Gastrocnemius medialis (tissue), 4 donors: ENCODE measurements at regions of chr12 and their contacts with region 1.

Region 1: DNA sequence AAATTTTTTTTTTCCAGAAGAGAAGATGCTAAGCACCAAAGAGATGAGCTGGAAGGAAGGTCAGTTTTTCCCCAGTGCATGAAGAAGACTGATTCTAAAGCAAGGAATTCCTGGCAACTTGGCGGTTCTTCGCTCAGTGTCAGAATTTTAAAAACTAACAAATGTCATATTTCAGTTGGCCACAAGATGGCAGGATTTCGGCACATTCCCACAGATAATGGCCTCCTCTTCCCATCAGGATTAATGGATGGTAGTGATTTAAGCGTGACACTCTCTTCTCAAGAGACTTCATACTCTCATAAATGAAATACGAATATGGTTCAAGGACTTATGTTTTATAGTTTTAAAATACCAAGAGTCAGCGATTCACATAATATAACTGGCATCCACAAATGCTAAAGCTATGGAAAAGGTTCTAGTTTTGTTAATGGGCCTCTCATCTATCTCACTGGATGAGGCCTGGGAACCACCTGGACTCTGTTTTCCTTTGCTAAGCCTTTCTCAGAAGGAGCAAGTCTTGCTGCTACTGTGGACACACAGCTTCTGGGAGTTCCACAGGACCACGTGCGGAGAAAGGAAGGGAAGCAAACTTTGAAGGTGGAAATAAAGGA is 46.1 kb upstream of the PTPRO start:
- DNase-seq: no peak
- ATAC-seq: peak; percentile 51 to 57
- H3K4me3 ChIP-seq: no peak overlapping the region
- H3K27ac ChIP-seq: no peak overlapping the region
- H3K4me1 ChIP-seq: peaks cover 12 to 34% of the 10 kb centered on the region in 2 donors
- H3K27me3 ChIP-seq: no peaks in the 10 kb centered on the region
- CTCF ChIP-seq: peak; percentile 40 to 73 (median 67)
- POLR2A ChIP-seq: no peak

Region 2: GRCh38 chr12:15151161-15152120 is 124.8 kb before region 1 on chr12:
- in situ Hi-C with region 1: loop called in 1 of 4 experiments (anchors 10 kb)
- intact Hi-C with region 1: no loop called
- DNase-seq: no peak
- ATAC-seq: peak; percentile 56 to 62
- H3K4me3 ChIP-seq: no peak overlapping the region
- H3K27ac ChIP-seq: peak overlapping the region; percentile 34 to 59 (median 54)
- H3K4me1 ChIP-seq: peaks cover 0 to 9% of the 10 kb centered on the region in 2 donors
- H3K27me3 ChIP-seq: no peaks in the 10 kb centered on the region
- CTCF ChIP-seq: peak in 4 of 5 experiments; percentile 37 to 48 (median 48)
- POLR2A ChIP-seq: no peak

Region 3: GRCh38 chr12:15387772-15388171 is 111.6 kb after region 1 on chr12:
- in situ Hi-C with region 1: no loop called
- intact Hi-C with region 1: no loop called
- DNase-seq: no peak
- ATAC-seq: no peak
- H3K4me3 ChIP-seq: no peak overlapping the region
- H3K27ac ChIP-seq: no peak overlapping the region
- H3K4me1 ChIP-seq: no peaks in the 10 kb centered on the region
- H3K27me3 ChIP-seq: no peaks in the 10 kb centered on the region
- CTCF ChIP-seq: no peak
- POLR2A ChIP-seq: no peak

Region 4: GRCh38 chr12:15423629-15424028 is 147.4 kb after region 1 on chr12:
- in situ Hi-C with region 1: no loop called
- intact Hi-C with region 1: no loop called
- DNase-seq: no peak
- ATAC-seq: no peak
- H3K4me3 ChIP-seq: no peak overlapping the region
- H3K27ac ChIP-seq: no peak overlapping the region
- H3K4me1 ChIP-seq: no peaks in the 10 kb centered on the region
- H3K27me3 ChIP-seq: no peaks in the 10 kb centered on the region
- CTCF ChIP-seq: no peak
- POLR2A ChIP-seq: no peak

Region 5: GRCh38 chr12:15522565-15523187 is 246.5 kb after region 1 on chr12:
- in situ Hi-C with region 1: loop called (anchors 5 to 10 kb)
- intact Hi-C with region 1: loop called (anchors 2 kb)
- DNase-seq: no peak
- ATAC-seq: peak in 1 of 2 donors; percentile 62
- H3K4me3 ChIP-seq: no peak overlapping the region
- H3K27ac ChIP-seq: no peak overlapping the region
- H3K4me1 ChIP-seq: no peaks in the 10 kb centered on the region
- H3K27me3 ChIP-seq: peaks cover 0 to 3% (median 0%) of the 10 kb centered on the region in 3 donors
- CTCF ChIP-seq: peak in 4 of 5 experiments; percentile 13 to 48 (median 39)
- POLR2A ChIP-seq: no peak

Region 6: GRCh38 chr12:15789220-15790171 is 513.3 kb after region 1 on chr12 and contains the start of gene EPS8:
- in situ Hi-C with region 1: no loop called
- intact Hi-C with region 1: loop called (anchors 10 kb)
- DNase-seq: peak; percentile 74 to 85
- ATAC-seq: peak; percentile 91 to 93
- H3K4me3 ChIP-seq: peak within 1 kb of the TSS; percentile 75 to 84 (median 82)
- H3K27ac ChIP-seq: peak within 1 kb of the TSS; percentile 84 to 91 (median 87)
- H3K4me1 ChIP-seq: peaks cover 0 to 5% of the 10 kb centered on the region in 2 donors
- H3K27me3 ChIP-seq: no peaks in the 10 kb centered on the region
- CTCF ChIP-seq: peak in 2 of 5 experiments; percentile 19 to 24
- POLR2A ChIP-seq: peak; percentile 76 to 87
- total RNA-seq, gene EPS8: 26.8 to 48.4 (median 32.0) TPM